Pancreas (tissue), 10 donors: ENCODE measurements at regions of chr4 and their contacts with region 1.

Region 1: DNA sequence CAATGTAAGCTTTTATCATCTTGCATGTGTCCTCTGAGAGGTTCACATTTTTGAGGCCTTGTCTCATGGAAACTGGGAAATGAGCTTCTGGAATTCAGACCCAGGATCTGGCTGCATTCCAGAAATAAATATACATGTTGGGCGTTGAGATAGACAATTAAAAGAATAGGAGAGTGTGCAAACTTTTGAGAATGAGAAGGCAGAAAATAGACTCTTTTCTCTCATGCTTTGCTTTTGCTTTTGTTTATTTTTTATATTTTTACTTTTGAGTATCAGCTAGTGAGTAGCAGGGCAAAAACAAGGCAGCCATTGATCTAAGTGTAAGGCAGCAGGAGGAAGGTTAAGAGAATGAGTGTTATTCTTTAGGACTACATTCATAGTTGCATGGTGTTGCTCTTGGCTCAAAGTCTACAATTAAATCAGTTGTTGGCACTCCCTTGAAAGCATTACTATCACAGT is 12.4 kb downstream of the SHROOM3 start:
- DNase-seq: no peak
- ATAC-seq: no peak
- H3K4me3 ChIP-seq: no peak overlapping the region
- H3K27ac ChIP-seq: peak overlapping the region in 1 of 4 donors; percentile 32
- H3K4me1 ChIP-seq: peaks cover 0 to 13% (median 0%) of the 10 kb centered on the region in 3 donors
- H3K27me3 ChIP-seq: no peaks in the 10 kb centered on the region
- CTCF ChIP-seq: no peak

Region 2: DNA sequence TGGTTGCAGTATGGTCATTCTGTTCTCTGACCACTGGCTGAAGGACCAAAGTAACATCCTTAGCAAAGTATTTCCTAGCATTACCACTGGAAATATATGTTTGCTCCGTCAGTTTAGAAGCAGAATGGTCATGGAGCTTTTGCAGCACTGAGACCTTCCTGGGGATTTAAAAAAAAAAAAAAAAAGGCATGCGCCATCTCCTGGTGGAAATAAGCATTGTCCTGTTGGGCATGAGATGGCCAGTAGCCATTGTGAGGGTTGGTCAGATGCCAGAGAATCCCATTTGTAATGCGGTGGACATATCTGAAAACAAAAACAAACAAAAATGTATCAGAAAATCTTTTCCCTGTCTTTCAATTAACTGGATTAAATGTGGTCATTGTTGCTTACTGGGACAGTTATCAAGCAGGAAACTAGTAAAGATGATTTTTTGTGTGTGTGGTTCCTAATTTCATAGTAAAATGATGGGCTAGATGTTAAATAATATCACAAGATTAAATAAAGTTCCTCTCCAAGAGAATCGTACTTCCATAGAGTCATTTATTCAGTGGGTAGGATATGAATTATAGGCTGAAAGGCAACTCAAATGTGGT is 311.0 kb after region 1 on chr4:
- intact Hi-C with region 1: loop called in 1 of 3 experiments (anchors 10 kb)
- DNase-seq: peak in 2 of 6 donors; percentile 18 to 48
- ATAC-seq: peak; percentile 75 to 90 (median 86)
- H3K4me3 ChIP-seq: no peak overlapping the region
- H3K27ac ChIP-seq: no peak overlapping the region
- H3K4me1 ChIP-seq: no peaks in the 10 kb centered on the region
- H3K27me3 ChIP-seq: no peaks in the 10 kb centered on the region
- CTCF ChIP-seq: peak; percentile 60 to 81 (median 70)

Region 3: GRCh38 chr4:77044461-77045150 is 597.2 kb after region 1 on chr4:
- intact Hi-C with region 1: no loop called
- DNase-seq: no peak
- ATAC-seq: peak; percentile 29 to 56 (median 56)
- H3K4me3 ChIP-seq: no peak overlapping the region
- H3K27ac ChIP-seq: no peak overlapping the region
- H3K4me1 ChIP-seq: no peaks in the 10 kb centered on the region
- H3K27me3 ChIP-seq: no peaks in the 10 kb centered on the region
- CTCF ChIP-seq: peak; percentile 21 to 39 (median 28)